ENCODE measurements at regions of chr7 and their contacts with region 1.

Region 1: DNA sequence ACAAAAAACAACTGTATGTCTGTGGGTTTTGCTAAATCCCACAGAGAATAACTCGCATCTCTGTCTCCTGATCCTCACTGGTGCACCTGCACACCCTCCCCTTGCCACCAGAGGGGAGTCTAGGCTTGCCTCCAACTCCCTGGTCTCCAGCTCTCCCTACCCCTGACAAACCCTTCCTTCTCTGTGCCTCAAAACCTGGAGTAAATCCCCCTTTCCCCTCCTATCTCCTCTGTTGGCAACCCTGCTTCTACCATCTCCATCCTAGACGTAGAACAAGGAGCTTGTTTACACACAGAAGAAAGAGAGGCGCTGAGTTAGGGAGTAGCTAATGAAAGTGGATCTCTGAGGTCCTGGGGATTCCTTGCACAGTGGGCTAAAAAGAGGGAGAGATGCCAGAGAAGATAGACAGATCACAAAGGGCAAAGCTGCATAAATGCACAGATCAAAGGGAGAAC is 6.0 kb downstream of the MBLAC1 start:
- DNase-seq: no peak
- ATAC-seq: peak; percentile 91
- H3K4me3 ChIP-seq: no peak overlapping the region
- H3K27ac ChIP-seq: no peak overlapping the region
- H3K4me1 ChIP-seq: peaks cover 6% of the 10 kb centered on the region
- H3K27me3 ChIP-seq: no peaks in the 10 kb centered on the region
- CTCF ChIP-seq: peak; percentile 77

Region 2: DNA sequence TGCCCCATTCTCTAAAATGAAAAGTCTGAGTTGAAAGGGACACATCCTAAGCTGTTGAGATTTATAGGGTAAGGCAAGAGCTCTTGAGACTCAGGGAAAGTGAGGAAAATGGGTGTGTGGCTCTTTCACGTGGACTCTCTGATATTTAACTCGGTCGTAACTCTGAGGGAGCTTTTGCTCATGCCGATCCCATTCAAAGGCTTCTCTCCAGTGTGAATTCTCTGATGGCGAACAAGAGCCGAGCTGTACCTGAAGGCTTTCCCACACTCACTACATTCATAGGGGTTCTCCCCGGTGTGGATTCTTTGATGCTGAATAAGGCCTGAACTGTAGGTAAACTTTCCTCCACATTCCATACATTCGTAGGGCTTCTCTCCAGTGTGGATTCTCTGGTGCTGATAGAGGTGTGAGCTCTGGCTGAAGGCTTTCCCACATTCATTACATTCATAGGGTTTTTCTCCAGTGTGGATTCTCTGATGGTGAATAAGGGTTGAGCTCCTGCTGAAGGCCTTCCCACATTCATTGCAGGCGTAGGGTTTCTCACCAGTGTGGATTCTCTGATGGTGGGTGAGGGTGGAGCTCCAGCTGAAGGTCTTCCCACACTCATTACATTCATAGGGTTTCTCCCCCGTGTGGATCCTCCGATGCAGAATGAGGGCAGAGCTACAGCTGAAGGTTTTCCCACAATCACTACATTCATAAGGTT is 61.6 kb before region 1 on chr7:
- intact Hi-C with region 1: no loop called
- DNase-seq: no peak
- ATAC-seq: no peak
- H3K4me3 ChIP-seq: no peak overlapping the region
- H3K27ac ChIP-seq: no peak overlapping the region
- H3K4me1 ChIP-seq: no peaks in the 10 kb centered on the region
- H3K27me3 ChIP-seq: no peaks in the 10 kb centered on the region
- CTCF ChIP-seq: no peak

Region 3: DNA sequence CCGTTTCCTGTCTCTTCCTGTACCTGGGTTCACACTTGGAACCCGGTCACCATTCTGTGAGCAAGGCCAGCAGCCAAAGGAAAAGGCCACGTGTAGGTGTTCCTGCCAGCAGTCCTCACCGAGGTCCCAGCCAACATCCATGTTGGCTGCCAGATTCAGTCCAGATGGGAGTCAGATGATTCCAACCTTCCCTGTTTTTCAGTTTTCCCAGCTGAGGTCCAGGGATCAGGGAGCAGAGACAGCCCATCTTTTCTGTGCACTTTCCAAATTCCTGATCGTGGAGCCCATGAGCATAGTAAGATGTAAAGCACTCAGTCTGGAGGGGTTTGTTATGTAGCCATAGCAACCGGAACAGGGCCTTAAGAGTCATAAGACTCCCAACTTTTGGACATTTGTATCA is 83.2 kb after region 1 on chr7:
- intact Hi-C with region 1: loop called (anchors 10 kb)
- DNase-seq: peak; percentile 20
- ATAC-seq: no peak
- H3K4me3 ChIP-seq: no peak overlapping the region
- H3K27ac ChIP-seq: no peak overlapping the region
- H3K4me1 ChIP-seq: no peaks in the 10 kb centered on the region
- H3K27me3 ChIP-seq: no peaks in the 10 kb centered on the region
- CTCF ChIP-seq: no peak

Region 4: DNA sequence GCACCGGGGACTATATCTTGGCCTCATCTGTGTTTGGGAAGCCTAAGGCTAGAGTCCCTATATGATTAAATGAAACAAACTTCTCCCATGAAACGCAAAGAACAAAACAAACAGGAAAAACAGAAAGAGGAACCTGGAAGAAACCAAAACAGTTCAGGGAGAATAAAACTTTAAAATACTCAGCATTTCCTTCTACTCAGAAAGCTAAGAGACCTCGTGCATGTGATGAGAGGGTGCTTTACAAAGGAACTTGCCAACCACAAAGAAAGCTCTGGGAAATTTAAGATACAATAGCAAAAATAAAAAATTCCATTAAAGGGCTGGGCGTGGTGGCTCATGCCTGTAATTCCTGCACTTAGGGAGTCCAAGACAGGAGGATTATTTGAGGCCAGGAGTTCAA is 247.5 kb after region 1 on chr7:
- intact Hi-C with region 1: no loop called
- DNase-seq: no peak
- ATAC-seq: peak; percentile 59
- H3K4me3 ChIP-seq: no peak overlapping the region
- H3K27ac ChIP-seq: peak overlapping the region; percentile 55
- H3K4me1 ChIP-seq: no peaks in the 10 kb centered on the region
- H3K27me3 ChIP-seq: no peaks in the 10 kb centered on the region
- CTCF ChIP-seq: no peak